Activated CD4-positive, alpha-beta memory T cell treated with anti-CD3 and anti-CD28 coated beads for 36 hours (primary cell): ENCODE measurements at regions of chrX and their contacts with region 1.

Region 1: DNA sequence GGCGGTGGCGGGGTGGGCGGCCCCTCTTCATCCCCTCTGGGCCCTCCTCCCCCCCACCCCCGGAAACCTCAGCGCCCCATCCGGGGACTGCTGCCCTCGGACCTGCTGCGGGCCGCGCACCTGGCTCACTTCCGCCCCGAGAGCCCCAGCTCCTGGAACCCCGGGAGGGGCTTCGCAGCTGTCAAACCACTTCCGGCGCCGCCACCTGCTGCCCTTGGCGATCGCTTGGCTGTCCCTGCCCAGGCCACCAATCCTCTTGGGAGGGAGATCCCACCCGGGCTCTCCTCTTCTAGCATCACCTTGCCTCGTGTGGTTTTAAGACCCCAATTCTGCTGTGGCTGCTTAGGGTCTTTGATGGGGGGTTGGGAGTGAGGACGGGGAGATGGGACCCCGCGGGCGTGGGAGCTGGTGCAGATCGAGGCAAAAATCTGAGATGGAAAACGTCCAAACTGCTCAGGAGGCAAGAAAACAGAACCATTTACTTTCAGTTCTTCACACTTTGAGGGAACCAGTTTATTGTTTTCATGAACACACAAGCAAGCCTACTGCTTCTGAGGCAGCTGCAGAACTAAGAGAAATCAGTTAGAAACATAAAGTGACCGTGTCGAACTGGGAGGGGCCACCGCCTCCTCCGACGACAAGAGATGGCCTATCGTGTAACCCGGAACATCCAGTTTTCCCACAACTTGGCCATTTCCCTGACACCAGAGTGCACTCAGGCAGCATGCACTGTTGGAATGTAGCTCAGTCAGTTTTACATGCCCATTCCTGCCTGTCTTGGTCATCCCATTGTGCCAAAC is 779 bp downstream of the MTMR1 start:
- DNase-seq: peak; percentile 86
- H3K4me3 Mint-ChIP-seq: peak overlapping the region; percentile 89
- H3K27ac Mint-ChIP-seq: peak overlapping the region; percentile 98
- H3K4me1 Mint-ChIP-seq: peaks cover 62% of the 10 kb centered on the region
- H3K27me3 Mint-ChIP-seq: no peaks in the 10 kb centered on the region

Region 2: DNA sequence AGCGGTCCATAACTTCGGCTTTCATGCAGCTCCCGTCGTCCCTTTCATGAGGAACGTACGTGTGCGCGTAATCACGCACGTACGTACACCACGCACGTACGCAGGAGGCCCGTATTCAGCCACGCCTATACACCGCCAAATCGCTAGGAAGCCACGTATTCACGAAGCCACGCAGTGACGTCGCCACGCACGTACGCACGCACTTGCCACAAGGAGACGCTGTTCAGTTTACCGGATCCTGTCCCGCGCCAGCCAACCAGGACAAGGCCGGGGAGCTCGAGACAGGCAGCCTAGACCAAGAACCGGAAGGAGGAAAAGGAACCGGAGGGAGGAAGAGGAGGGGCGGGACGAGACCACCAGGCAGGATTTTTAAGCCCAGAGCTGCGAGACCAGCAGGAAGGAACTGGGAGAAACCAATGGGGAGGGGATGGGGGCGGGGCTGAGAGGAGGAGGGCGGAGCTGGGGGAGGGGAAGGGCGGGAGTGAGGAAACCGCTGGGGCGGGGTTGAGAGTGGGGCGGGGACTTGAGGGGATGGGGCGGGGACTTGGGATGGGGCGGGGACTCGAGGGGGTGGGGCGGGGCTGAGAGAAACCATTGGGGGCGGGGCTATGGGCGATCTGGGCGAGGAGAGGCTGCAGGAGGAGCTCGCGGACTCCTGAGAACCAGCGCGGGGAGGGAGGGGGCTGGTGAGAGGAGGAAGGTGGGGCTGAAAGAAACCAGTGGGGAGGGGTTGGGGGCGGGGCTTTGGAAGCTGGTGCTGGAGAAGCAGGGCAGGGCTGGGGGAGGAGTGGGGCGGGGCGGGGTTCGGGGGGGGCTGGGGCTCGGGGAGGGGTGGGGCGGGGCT is 755.3 kb before region 1 on chrX and contains the start of gene EOLA2:
- CTCF ChIA-PET with region 1: no interaction called
- POLR2A ChIA-PET with region 1: interaction called, 3 read pairs
- intact Hi-C with region 1: loop called (anchors 10 kb)
- DNase-seq: peak; percentile 95
- H3K4me3 Mint-ChIP-seq: peak within 1 kb of the TSS; percentile 85
- H3K27ac Mint-ChIP-seq: peak within 1 kb of the TSS; percentile 99
- H3K4me1 Mint-ChIP-seq: no peaks in the 10 kb centered on the region
- H3K27me3 Mint-ChIP-seq: no peaks in the 10 kb centered on the region
- total RNA-seq, gene EOLA2: 32.4 to 33.7 TPM

Region 3: DNA sequence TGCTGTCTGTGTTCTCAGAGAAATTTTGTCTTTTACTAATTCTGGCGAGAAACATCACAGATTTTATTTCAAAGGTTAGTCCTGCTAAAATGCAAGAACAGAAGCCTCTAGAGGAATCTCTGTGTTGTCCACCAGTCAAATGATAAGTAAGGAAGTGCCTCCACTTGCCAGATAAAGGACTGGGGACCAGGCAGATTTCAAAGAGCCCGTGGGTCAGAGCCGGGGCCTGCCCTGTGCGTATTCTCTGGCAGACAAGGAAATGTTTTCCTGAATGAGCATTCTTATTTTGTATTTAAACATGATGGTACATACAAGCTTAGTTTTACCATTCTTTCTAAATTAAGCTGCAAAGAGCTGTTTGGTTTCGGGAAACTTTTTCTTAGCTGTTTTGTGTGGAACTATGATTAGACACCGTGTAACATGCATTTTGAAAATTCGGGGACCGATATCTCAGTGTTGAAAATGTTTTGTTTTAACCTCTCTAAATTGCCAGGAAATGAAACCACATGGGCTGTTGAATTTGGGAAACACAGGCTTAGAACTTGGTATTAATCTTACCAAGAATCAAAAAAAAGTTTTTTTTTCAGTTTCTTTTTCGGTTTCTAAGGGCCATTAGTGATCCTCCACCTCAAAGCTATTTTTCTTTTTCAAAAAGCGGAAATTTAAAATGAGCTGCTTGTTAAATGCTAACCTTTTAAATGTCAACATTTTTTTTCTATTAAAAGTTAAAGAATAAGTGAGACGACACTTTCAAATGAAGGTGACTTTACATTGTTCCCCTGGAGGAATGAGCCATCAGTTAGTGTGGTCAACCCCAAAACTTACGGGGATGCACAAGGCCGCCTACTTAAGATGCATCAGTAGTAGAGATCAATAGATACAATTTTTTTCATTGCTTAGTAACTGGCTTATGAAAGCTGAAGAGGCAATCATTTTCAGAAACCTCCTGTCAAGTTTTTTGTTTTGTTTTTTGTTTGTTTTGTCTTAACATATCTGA is 215.2 kb before region 1 on chrX:
- CTCF ChIA-PET with region 1: no interaction called
- POLR2A ChIA-PET with region 1: interaction called, 3 read pairs
- intact Hi-C with region 1: loop called (anchors 1 kb)
- DNase-seq: peak; percentile 61
- H3K4me3 Mint-ChIP-seq: peak overlapping the region; percentile 62
- H3K27ac Mint-ChIP-seq: peak overlapping the region; percentile 82
- H3K4me1 Mint-ChIP-seq: peaks cover 62% of the 10 kb centered on the region
- H3K27me3 Mint-ChIP-seq: no peaks in the 10 kb centered on the region

Region 4: GRCh38 chrX:150683536-150684146 is 10.3 kb before region 1 on chrX:
- CTCF ChIA-PET with region 1: interaction called, 18 read pairs
- POLR2A ChIA-PET with region 1: no interaction called
- intact Hi-C with region 1: no loop called
- DNase-seq: no peak
- H3K4me3 Mint-ChIP-seq: no peak overlapping the region
- H3K27ac Mint-ChIP-seq: no peak overlapping the region
- H3K4me1 Mint-ChIP-seq: peaks cover 9% of the 10 kb centered on the region
- H3K27me3 Mint-ChIP-seq: no peaks in the 10 kb centered on the region

Region 5: DNA sequence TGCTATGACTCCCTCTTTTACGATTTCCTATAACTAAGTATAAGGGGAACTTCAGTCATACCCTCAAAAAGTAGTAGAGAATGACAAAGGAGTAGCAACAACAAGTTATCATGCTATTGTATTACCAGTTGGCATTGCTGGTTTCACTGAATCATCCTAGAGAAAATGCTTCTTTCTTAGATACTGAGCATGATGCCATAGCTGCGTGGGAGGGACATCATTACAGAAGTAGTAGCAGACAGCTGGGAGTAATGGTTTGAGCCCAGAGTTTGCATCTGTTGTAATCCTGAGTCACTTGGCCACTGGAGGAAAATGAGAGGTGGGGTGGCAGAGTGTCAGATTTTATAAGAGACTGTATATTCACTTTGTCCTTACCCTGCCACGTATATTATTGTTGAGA is 37.8 kb after region 1 on chrX:
- CTCF ChIA-PET with region 1: interaction called, 3 read pairs
- POLR2A ChIA-PET with region 1: no interaction called
- intact Hi-C with region 1: loop called (anchors 2 kb)
- DNase-seq: peak; percentile 79
- H3K4me3 Mint-ChIP-seq: no peak overlapping the region
- H3K27ac Mint-ChIP-seq: peak overlapping the region; percentile 15
- H3K4me1 Mint-ChIP-seq: peaks cover 35% of the 10 kb centered on the region
- H3K27me3 Mint-ChIP-seq: no peaks in the 10 kb centered on the region

Region 6: DNA sequence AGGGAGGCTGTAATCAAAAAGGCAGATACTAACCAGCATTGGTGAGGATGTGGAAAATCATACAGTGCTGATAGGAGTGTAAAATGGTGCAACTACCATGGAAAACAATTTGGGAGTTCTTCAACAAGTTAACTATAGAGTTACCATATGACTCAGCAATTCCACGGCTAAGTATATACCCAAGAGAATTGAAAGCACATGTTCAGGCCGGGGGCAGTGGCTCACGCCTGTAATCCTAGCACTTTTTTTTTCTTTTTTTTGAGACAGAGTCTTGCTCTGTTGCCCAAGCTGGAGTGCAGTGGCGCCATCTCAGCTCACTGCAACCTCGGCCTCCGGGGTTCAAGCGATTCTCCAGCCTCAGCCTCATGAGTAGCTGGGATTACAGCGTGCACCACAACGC is 219.5 kb after region 1 on chrX:
- CTCF ChIA-PET with region 1: no interaction called
- POLR2A ChIA-PET with region 1: no interaction called
- intact Hi-C with region 1: no loop called
- DNase-seq: no peak
- H3K4me3 Mint-ChIP-seq: no peak overlapping the region
- H3K27ac Mint-ChIP-seq: no peak overlapping the region
- H3K4me1 Mint-ChIP-seq: no peaks in the 10 kb centered on the region
- H3K27me3 Mint-ChIP-seq: no peaks in the 10 kb centered on the region